Cardiac septum (tissue), 1 donor: ENCODE measurements at regions of chr11 and their contacts with region 1.

Region 1: DNA sequence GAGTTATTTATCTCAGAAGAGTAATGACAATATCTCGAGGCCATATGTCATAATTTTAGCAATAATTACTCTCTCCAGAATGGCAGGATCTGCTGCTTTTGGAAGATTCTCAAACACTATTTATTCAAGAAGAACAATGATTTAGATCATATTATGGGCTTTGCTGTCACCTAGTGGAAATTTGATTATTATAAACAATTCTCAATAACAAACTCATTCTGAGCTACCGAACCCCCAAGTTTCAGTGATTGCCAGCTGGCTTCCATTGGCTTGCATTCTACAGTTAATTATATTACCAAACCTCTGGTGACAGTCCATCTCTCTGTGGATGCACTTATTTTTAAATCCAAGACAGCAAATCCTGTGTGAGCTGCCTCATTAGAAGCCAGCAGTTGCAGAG is 27.9 kb upstream of the SLC36A4 start:
- DNase-seq: no peak

Region 2: DNA sequence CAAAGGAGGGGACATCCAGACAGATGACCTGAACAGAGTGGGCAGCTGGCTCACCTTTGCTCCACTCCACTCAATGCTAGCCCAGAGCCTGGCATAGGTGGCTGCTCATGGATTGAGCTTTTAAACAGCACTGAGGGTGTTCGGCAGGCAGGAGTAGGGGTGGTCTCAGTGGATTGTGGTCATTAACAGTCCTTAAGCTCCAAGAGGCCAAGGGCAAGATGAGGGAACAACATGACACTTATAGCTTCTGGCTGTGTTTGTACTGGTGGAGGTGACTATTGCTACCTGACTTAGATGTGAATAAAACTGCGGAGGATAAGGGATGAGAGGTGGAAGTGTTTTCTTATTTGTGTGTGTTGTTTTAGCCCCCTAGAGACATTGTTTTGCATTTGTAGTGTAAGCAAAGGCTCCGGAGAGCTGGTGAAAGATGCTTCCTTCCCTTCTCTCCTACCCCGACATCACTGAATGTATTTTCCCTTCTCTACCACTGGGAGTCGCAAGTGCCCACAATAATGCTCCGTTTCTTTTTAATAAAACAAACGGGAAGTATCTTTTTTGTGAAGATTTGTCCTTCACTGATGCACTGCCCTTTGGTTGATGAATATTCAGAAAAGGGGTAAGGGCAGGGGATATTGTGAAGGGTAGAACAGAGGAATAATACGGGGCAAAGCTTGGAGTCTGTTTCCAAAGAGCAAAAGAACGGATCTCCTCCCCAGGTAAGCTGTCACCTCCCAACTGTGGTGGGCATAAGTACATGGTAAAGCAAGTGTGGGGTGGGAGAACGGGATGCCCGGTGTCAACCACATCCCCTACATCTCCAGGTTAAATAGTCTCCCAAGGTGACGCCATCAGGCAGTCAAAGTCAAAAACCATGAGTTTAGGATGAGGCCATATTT is 283.7 kb before region 1 on chr11:
- intact Hi-C with region 1: loop called (anchors 5 kb)
- DNase-seq: no peak

Region 3: GRCh38 chr11:92978271-92979111 is 247.2 kb before region 1 on chr11:
- intact Hi-C with region 1: no loop called
- DNase-seq: no peak

Region 4: GRCh38 chr11:93123351-93123898 is 102.2 kb before region 1 on chr11:
- intact Hi-C with region 1: no loop called
- DNase-seq: no peak

Region 5: DNA sequence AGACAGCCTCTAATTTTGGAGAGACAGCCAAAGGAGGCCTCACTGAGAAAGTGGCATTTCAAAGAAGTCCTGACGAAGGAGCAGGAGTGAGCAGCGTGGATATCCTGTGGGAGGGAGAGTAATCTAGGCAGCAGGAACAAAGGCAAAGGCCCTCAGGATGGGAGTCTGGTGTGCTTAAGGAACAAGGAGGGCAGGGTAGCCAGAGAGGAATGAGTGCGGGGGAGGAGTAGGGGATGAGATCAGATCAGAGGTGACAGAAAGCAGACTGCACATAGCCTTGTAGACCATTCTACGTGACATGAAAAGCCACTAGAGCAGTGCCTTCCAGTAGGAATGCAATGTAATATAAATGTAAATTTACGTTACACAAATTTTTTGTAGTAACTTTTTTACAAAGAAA is 33.5 kb before region 1 on chr11:
- intact Hi-C with region 1: no loop called
- DNase-seq: no peak

Region 6: DNA sequence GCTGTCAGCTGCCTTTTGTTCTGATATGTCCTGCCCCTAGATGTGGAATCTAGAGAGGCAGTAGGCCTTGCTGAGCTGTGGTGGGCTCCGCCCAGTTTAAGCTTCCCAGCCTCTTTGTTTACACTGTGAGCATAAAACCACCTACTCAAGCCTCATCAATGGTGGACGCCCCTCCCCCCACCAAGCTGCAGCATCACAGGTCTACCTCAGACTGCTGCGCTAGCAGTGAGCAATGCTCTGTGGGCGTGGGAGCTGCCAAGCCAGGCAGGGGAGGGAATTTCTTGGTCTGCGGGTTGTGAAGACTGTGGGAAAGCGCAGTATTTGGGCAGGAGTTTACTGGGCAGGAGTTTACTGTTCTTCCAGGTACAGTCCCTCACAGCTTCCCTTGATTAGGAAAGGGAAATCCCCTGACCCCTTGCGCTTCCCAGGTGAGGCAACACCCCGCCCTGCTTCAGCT is 219.0 kb after region 1 on chr11:
- intact Hi-C with region 1: no loop called
- DNase-seq: no peak